Gastrocnemius medialis (tissue), 4 donors: ENCODE measurements at regions of chr17 and their contacts with region 1.

Region 1: GRCh38 chr17:72120642-72121163 is at the start of gene SOX9:
- DNase-seq: peak; percentile 93
- ATAC-seq: peak; percentile 91
- H3K4me3 ChIP-seq: peak within 1 kb of the TSS; percentile 70 to 76 (median 74)
- H3K27ac ChIP-seq: peak within 1 kb of the TSS; percentile 88 to 91 (median 90)
- H3K4me1 ChIP-seq: peaks cover 11 to 30% of the 10 kb centered on the region in 2 donors
- H3K27me3 ChIP-seq: peaks cover 4 to 17% (median 9%) of the 10 kb centered on the region in 3 donors
- CTCF ChIP-seq: no peak
- POLR2A ChIP-seq: peak; percentile 80 to 94
- total RNA-seq, gene SOX9: 0.31 to 1.0 (median 0.56) TPM

Region 2: DNA sequence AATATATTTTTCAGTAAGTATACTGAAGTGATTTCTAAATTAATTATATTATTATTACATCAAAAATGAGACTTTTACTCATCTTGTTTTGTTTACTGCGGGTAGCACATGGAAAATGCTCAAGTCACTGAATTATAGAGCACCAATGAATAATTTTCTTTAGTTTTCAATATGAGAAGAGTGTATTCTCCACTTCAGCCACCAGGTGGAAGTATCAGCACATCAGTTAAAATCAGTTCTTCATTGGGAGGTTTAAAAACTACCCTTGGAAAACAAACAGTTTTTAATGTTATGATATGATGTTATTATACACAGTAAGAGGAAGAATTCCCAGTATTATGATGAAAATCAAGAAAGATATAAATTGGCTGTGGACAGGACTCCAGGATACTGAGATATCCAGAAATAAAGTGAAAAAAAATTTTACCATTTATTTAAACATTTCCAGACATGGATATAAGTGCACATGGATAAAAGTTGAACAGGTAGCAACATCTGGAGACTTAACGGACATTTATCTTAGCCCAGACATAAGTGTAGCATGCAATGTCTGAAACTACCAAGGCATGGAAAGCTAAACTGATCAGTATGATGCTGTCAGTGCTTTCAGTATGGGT is 1484.1 kb before region 1 on chr17:
- in situ Hi-C with region 1: no loop called
- intact Hi-C with region 1: loop called (anchors 5 kb)
- DNase-seq: no peak
- ATAC-seq: no peak
- H3K4me3 ChIP-seq: no peak overlapping the region
- H3K27ac ChIP-seq: no peak overlapping the region
- H3K4me1 ChIP-seq: no peaks in the 10 kb centered on the region
- H3K27me3 ChIP-seq: no peaks in the 10 kb centered on the region
- CTCF ChIP-seq: peak; percentile 55 to 76 (median 61)
- POLR2A ChIP-seq: no peak

Region 3: DNA sequence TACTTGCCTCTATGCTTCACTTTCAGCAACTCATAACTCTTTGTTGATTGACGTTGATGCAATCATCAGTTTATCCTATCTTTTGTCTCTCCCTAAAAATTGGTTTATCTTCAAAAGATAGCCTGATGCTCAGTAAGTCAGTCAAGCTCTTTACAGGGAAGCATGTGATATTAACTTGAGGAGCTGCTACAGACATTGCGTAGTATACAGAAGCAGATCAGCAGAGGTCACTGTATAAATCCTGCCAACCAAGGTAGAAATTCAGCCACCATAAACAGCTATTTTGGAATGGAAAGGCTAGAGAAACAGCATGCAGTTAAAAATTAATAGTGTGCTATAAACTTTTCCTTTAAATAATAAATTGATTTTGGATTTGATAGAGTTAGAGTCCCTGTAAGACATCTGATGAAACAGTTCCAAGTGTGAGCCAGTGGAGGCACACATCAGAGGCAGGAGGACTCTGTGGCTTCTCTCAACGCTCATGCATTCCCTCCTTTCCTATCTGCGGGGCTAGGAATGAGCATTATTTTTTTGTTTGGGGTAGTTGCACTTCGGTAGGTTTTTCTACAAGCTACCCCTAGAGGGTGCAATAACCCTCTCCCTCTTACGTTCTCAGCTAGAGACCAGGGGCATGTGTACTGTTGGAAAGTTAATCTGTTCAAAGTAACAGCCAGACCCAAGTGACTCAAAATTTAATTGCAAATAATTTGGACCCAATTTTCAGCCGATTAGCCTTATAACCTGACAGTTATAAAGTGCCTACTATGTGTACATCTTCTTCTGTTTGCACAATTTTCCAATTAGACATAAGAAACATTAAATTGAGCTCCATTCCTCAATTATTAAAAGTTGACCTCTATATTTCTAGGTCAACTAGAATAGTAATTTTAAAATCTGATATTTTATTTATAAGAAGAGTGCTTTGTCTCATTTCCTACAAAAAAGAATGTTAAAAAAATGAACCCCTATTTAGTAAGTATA is 647.6 kb before region 1 on chr17:
- in situ Hi-C with region 1: no loop called
- intact Hi-C with region 1: loop called (anchors 2 kb)
- DNase-seq: no peak
- ATAC-seq: peak in 1 of 2 donors; percentile 71
- H3K4me3 ChIP-seq: no peak overlapping the region
- H3K27ac ChIP-seq: no peak overlapping the region
- H3K4me1 ChIP-seq: no peaks in the 10 kb centered on the region
- H3K27me3 ChIP-seq: no peaks in the 10 kb centered on the region
- CTCF ChIP-seq: peak; percentile 20 to 57 (median 32)
- POLR2A ChIP-seq: no peak

Region 4: DNA sequence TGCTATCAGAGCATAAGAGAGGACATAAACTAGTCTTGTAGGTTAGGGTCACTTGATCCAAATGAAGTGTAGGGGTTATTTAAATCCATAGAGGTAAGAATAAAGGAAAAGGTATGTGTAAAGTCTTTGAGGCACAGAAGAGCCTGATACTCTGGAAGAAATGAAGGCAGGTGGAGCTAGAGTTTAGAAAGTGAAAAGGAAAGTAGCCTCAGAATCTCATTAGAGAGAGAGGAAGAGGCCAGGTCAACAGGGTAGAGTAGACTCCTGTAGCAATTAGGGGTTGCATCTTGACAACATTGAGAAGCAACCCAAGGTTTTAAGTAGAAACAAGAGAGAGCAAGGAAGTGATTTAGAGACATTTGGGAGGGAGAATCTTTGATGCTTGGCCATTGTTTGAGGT is 235.0 kb before region 1 on chr17:
- in situ Hi-C with region 1: no loop called
- intact Hi-C with region 1: loop called (anchors 1 kb)
- DNase-seq: no peak
- ATAC-seq: peak in 1 of 2 donors; percentile 54
- H3K4me3 ChIP-seq: no peak overlapping the region
- H3K27ac ChIP-seq: no peak overlapping the region
- H3K4me1 ChIP-seq: no peaks in the 10 kb centered on the region
- H3K27me3 ChIP-seq: no peaks in the 10 kb centered on the region
- CTCF ChIP-seq: peak in 1 of 5 experiments; percentile 23
- POLR2A ChIP-seq: no peak

Region 5: GRCh38 chr17:71966459-71967313 is 154.0 kb before region 1 on chr17:
- in situ Hi-C with region 1: no loop called
- intact Hi-C with region 1: loop called (anchors 1 kb)
- DNase-seq: peak; percentile 83 to 86
- ATAC-seq: peak; percentile 97 to 98
- H3K4me3 ChIP-seq: peak overlapping the region in 2 of 4 donors; percentile 17 to 33
- H3K27ac ChIP-seq: peak overlapping the region; percentile 83 to 91 (median 88)
- H3K4me1 ChIP-seq: peaks cover 19 to 20% of the 10 kb centered on the region in 2 donors
- H3K27me3 ChIP-seq: no peaks in the 10 kb centered on the region
- CTCF ChIP-seq: no peak
- POLR2A ChIP-seq: peak; percentile 17 to 46